Heart right ventricle (tissue), 16 donors: ENCODE measurements at regions of chr4 and their contacts with region 1.

Region 1: DNA sequence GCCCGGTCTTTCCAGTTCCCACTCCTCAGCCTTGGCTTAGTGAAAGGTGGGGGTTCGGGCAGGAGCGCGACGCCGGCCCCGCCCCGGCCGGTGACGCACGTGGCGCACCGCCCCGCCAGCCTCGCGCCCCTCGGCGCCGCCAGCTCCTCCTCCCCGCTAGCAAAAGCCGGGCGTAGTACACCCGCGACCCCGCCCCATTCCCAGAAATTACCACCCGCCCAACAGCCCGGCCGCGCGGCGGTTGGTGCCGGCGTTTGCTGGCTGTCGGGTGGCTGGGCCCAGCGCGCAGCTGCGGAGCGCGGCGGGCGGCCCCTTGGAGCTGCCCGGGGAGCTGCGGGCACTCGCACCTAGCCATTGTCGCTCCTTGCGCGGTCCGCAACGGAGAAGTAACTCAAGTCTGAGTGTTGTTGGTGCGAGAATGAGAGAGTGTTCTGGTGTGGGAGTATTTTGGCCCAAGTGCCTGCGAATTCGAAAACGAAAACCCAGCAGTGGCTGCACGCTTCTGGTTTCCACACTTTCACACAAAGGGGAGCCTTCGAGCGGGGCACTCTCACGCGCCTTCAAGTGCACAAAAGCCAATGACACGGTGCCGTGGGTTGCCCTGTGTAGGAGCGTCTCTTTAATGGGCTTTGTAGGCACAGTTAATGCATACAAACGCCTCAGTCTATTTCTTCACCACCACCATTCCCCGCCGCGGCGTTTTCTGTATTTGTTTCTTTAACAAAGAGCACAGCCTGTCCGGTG is 1.0 kb upstream of the ELF2 start:
- DNase-seq: peak; percentile 94 to 96
- ATAC-seq: peak; percentile 83 to 92 (median 88)
- H3K4me3 ChIP-seq: peak overlapping the region; percentile 79 to 100 (median 98)
- H3K27ac ChIP-seq: peak overlapping the region; percentile 98 to 100 (median 100)
- H3K4me1 ChIP-seq: peaks cover 0 to 37% (median 23%) of the 10 kb centered on the region in 9 donors
- H3K27me3 ChIP-seq: no peaks in the 10 kb centered on the region
- CTCF ChIP-seq: no peak

Region 2: GRCh38 chr4:139030614-139031235 is 147.3 kb before region 1 on chr4:
- intact Hi-C with region 1: loop called in 3 of 10 experiments (anchors 5 to 10 kb)
- DNase-seq: peak in 1 of 2 donors; percentile 80
- ATAC-seq: peak in 7 of 8 donors; percentile 27 to 70 (median 44)
- H3K4me3 ChIP-seq: no peak overlapping the region
- H3K27ac ChIP-seq: peak overlapping the region in 1 of 10 donors; percentile 82
- H3K4me1 ChIP-seq: peaks cover 0 to 41% (median 9%) of the 10 kb centered on the region in 9 donors
- H3K27me3 ChIP-seq: no peaks in the 10 kb centered on the region
- CTCF ChIP-seq: peak; percentile 60 to 87 (median 81)

Region 3: DNA sequence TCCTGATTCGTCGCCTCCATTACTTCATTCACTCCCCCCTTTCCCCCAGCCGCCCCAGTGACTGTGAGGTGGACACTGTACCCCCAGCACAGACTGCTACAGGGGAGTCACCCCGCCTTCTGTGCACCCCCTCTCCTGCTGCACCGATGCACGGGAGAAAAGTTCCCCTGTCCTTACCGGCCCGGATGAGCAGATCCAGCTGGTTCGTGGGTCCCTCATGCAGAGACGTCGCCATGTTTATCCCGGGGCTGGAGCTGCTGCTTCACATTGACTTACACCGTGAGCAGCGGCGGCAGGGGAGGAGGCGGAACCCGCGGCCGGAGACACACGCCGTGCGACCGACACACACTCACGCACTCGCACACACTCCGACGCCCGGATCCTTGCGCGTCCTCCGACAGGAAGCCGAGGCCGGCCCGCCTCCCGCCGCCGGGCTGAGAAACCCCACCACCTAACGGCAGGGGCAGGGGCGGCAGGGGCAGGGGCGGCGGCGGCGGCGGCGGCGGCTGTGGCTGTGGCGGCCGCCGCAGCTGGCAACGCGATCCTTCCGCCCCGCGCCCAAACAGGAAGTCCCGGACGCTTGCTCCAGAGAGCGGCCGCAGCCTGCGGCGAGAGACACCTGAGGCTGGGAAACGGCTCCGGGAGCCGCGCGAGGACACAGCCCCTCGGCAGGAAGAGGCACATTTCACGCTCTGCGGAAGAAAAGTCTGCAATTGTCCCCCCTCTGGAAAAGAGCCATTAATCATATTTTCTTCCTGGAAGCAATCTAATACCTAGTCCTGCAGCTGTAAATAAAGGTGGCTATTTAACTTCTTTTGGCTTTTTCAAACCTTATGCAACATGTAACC is 93.9 kb before region 1 on chr4:
- intact Hi-C with region 1: loop called in 6 of 10 experiments (anchors 2 to 10 kb)
- DNase-seq: peak; percentile 89 to 90
- ATAC-seq: peak; percentile 71 to 92 (median 80)
- H3K4me3 ChIP-seq: peak overlapping the region; percentile 64 to 89 (median 78)
- H3K27ac ChIP-seq: peak overlapping the region; percentile 88 to 95 (median 93)
- H3K4me1 ChIP-seq: peaks cover 2 to 44% (median 38%) of the 10 kb centered on the region in 9 donors
- H3K27me3 ChIP-seq: no peaks in the 10 kb centered on the region
- CTCF ChIP-seq: peak in 8 of 9 donors; percentile 10 to 53 (median 39)

Region 4: GRCh38 chr4:139099366-139099982 is 78.6 kb before region 1 on chr4:
- intact Hi-C with region 1: loop called in 6 of 10 experiments (anchors 5 to 10 kb)
- DNase-seq: peak; percentile 19 to 73
- ATAC-seq: peak; percentile 50 to 89 (median 72)
- H3K4me3 ChIP-seq: no peak overlapping the region
- H3K27ac ChIP-seq: no peak overlapping the region
- H3K4me1 ChIP-seq: no peaks in the 10 kb centered on the region
- H3K27me3 ChIP-seq: no peaks in the 10 kb centered on the region
- CTCF ChIP-seq: peak; percentile 73 to 93 (median 87)

Region 5: DNA sequence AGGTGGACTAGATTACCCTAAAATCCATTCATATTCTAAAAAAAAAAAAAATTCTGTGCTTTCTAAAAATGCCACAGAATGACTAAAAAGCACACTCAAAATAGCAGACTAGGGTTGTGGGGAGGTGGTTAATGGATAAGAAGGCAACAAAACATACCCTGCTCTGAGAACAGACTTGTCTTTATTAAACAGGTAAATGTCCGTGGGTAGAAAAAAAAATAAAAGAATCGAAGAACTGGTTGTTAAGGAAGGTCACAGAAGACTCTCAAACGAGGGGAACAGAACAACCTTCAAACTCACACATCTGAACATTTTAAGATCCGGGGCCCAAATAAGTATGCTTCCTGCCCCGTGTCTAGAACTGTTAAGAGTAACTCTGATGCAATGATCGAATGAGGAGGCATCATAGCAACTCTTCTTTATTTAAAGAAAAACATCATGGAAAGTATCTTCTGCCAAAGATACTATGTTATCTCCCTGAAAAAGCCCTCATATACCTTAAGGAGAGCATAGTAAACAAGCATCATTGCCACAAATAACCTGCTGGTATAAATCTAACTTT is 69.4 kb before region 1 on chr4:
- intact Hi-C with region 1: loop called in 2 of 10 experiments (anchors 5 to 10 kb)
- DNase-seq: no peak
- ATAC-seq: no peak
- H3K4me3 ChIP-seq: no peak overlapping the region
- H3K27ac ChIP-seq: no peak overlapping the region
- H3K4me1 ChIP-seq: no peaks in the 10 kb centered on the region
- H3K27me3 ChIP-seq: no peaks in the 10 kb centered on the region
- CTCF ChIP-seq: no peak

Region 6: GRCh38 chr4:139295206-139295941 is 117.3 kb after region 1 on chr4:
- intact Hi-C with region 1: loop called in 7 of 10 experiments (anchors 2 to 10 kb)
- DNase-seq: peak; percentile 97
- ATAC-seq: peak; percentile 96 to 99 (median 97)
- H3K4me3 ChIP-seq: peak overlapping the region; percentile 63 to 89 (median 80)
- H3K27ac ChIP-seq: peak overlapping the region; percentile 83 to 96 (median 94)
- H3K4me1 ChIP-seq: peaks cover 0 to 62% (median 28%) of the 10 kb centered on the region in 9 donors
- H3K27me3 ChIP-seq: no peaks in the 10 kb centered on the region
- CTCF ChIP-seq: peak in 8 of 9 donors; percentile 84 to 100 (median 97)

Region 7: GRCh38 chr4:139301113-139301820 is 123.2 kb after region 1 on chr4 and contains the start of gene NAA15:
- intact Hi-C with region 1: loop called in 7 of 10 experiments (anchors 2 to 10 kb)
- DNase-seq: peak; percentile 98 to 99
- ATAC-seq: peak; percentile 97 to 98 (median 98)
- H3K4me3 ChIP-seq: peak within 1 kb of the TSS; percentile 72 to 99 (median 84)
- H3K27ac ChIP-seq: peak within 1 kb of the TSS; percentile 59 to 94 (median 90)
- H3K4me1 ChIP-seq: peaks cover 0 to 67% (median 36%) of the 10 kb centered on the region in 9 donors
- H3K27me3 ChIP-seq: no peaks in the 10 kb centered on the region
- CTCF ChIP-seq: no peak
- total RNA-seq, gene NAA15: 26.1 to 45.4 (median 33.7) TPM